Endothelial cell of umbilical vein (primary cell): ENCODE measurements at regions of chr4 and their contacts with region 1.

Region 1: DNA sequence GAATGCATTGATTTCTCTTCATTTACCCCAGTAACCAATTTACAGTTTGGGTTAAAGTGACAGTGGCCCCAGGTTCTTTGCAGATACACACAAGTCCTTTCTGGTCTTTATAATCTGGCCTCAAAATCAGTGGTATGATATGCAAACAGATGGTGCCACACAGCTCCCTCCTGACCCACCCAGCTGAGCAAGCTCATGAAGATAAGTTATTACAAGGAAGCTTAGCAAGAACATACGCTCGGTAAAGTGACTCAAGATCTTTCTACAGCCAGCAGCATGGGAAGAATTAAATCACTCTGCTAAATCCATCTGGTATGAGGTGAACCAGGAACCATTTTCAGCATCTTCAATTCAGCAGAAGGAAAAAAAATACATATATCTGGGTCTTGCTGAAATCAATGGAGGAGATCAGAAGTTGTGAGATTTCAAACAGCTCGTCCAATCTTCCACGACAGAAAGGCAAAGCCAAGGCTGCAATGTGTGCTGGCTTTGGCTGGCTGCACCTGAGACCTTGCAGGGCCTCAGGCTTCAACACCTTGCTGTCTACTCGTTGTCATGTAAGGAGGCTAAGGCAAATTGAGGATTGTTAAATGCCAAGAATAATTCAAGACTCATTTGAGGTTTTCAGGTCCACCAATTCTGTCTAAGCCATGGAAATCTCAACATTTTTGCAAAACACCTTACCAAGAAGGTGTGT is 28.2 kb downstream of the SEL1L3 start:
- DNase-seq: no peak
- H3K4me3 ChIP-seq: no peak overlapping the region
- H3K27ac ChIP-seq: no peak overlapping the region
- H3K4me1 ChIP-seq: no peaks in the 10 kb centered on the region
- H3K27me3 ChIP-seq: no peaks in the 10 kb centered on the region
- CTCF ChIP-seq: no peak
- POLR2A ChIP-seq: no peak

Region 2: GRCh38 chr4:25857403-25857802 is 22.8 kb after region 1 on chr4:
- CTCF ChIA-PET with region 1: no interaction called
- POLR2A ChIA-PET with region 1: no interaction called
- dilution Hi-C with region 1: no loop called
- intact Hi-C with region 1: loop called (anchors 2 kb)
- DNase-seq: no peak
- H3K4me3 ChIP-seq: no peak overlapping the region
- H3K27ac ChIP-seq: no peak overlapping the region
- H3K4me1 ChIP-seq: peaks cover 48% of the 10 kb centered on the region
- H3K27me3 ChIP-seq: no peaks in the 10 kb centered on the region
- CTCF ChIP-seq: peak in 1 of 2 donors; percentile 7
- POLR2A ChIP-seq: no peak